ENCODE measurements at regions of chr10 and their contacts with region 1.

Region 1: DNA sequence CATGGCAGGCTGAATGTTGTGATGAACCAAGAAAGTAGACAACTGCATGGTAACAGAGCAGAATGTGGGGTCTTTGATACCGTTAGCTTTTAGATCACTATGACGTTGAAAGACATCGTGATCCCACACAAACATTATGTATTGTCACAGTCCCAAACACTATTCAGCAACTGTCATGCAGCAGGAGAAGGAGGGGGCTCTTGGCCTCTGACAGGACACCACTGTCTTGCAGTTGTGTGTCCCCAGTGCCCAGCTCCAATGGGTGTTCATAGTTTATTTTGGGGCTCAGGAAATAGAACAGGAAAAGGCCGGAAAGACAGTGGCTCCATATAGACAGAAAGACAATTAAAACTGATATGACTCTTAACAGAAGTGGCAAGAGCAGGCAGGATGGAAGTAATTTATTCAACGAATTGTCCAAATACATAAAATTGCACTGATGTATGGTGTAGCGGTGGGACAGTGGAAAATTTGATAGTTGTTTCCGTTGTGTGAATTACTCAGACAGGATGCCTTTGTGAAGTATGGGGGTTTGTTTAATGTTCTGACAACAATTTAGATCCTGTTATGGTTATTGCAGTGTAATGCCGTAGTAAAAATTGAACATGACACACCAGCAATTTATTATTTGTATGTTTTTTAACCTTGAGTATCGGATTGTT is 292.0 kb downstream of the LRMDA start:
- DNase-seq: peak; percentile 85
- H3K4me3 ChIP-seq: no peak overlapping the region
- H3K27ac ChIP-seq: peak overlapping the region; percentile 38
- H3K4me1 ChIP-seq: peaks cover 18% of the 10 kb centered on the region
- H3K27me3 ChIP-seq: no peaks in the 10 kb centered on the region
- CTCF ChIP-seq: no peak
- POLR2A ChIP-seq: no peak

Region 2: GRCh38 chr10:75655791-75656451 is 67.5 kb before region 1 on chr10:
- CTCF ChIA-PET with region 1: no interaction called
- POLR2A ChIA-PET with region 1: no interaction called
- dilution Hi-C with region 1: no loop called
- intact Hi-C with region 1: loop called (anchors 2 kb)
- DNase-seq: peak; percentile 36
- H3K4me3 ChIP-seq: no peak overlapping the region
- H3K27ac ChIP-seq: no peak overlapping the region
- H3K4me1 ChIP-seq: peaks cover 21% of the 10 kb centered on the region
- H3K27me3 ChIP-seq: peaks cover 0 to 2% of the 10 kb centered on the region in 2 experiments
- CTCF ChIP-seq: no peak
- POLR2A ChIP-seq: no peak

Measured in endothelial cell of umbilical vein (primary cell).